ENCODE measurements at regions of chr2 and their contacts with region 1.

Region 1: GRCh38 chr2:636641-637405 is 40.4 kb downstream of the TMEM18 start:
- DNase-seq: peak in 9 of 10 donors; percentile 54 to 83 (median 72)
- H3K4me3 ChIP-seq: peak overlapping the region in 58 of 59 donors; percentile 12 to 64 (median 48)
- H3K27ac ChIP-seq: peak overlapping the region in 4 of 59 donors; percentile 30 to 67 (median 48)
- H3K27me3 ChIP-seq: peaks cover 0 to 3% (median 0%) of the 10 kb centered on the region in 45 donors
- CTCF ChIP-seq: peak; percentile 79 to 97 (median 90)

Region 2: DNA sequence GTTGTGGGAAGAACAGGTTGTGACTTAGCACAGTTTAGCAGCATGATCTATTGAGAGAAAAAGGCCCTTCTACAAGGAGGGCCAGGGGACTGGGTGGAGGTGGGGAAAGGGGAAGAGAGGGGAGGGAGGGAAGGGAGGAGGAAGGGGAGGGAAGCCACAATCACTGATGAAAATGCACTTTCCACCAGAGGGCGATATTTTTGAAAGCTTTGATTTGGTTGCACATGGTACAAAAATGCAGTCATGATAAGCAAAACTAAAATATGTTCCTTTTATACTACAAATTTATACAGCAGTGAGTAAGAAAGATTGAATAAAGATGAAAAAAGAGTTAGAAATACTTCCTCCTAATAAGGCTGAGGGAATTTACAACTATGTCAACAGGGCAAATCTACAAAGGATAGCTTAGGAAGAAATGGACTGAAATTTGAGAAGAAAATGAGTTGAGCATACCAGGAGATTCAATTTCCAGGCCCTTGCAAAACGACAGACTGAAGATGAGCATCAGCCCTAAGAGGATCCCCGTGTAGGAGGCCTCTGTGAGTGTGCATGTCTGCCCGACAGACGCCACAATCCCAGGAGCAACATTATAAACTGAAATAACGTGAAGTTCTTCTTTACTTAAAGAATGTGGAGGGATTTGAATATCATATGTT is 390.2 kb before region 1 on chr2:
- intact Hi-C with region 1: loop called in 1 of 2 experiments (anchors 10 kb)
- DNase-seq: no peak
- H3K4me3 ChIP-seq: no peak overlapping the region
- H3K27ac ChIP-seq: peak overlapping the region in 8 of 59 donors; percentile 2 to 45 (median 14)
- H3K27me3 ChIP-seq: no peaks in the 10 kb centered on the region
- CTCF ChIP-seq: peak; percentile 42 to 77 (median 67)

Region 3: DNA sequence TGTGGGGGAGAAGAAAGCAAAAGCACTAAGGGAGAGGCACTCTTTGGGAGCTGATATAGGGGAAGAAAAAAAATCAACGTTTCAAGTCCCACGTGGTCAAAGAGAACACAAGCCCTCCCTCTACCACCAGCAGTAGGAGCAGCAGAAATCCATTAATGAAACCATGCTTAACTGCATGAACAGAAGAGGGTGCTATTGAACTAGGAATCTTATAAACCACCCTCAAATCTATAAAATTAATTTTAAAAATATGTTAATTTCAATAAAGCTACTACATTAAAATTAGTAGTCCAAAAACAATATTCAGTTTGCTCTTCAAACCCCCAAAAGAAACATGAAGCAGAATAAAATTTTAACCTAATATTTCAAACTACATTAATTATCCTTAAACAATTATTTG is 107.4 kb before region 1 on chr2:
- intact Hi-C with region 1: loop called (anchors 2 to 10 kb)
- DNase-seq: no peak
- H3K4me3 ChIP-seq: no peak overlapping the region
- H3K27ac ChIP-seq: no peak overlapping the region
- H3K27me3 ChIP-seq: peaks cover 0 to 13% (median 0%) of the 10 kb centered on the region in 45 donors
- CTCF ChIP-seq: peak in 50 of 56 donors; percentile 12 to 77 (median 44)

Region 4: GRCh38 chr2:677056-677965 is 40.5 kb after region 1 on chr2 and contains the start of gene TMEM18:
- intact Hi-C with region 1: loop called in 1 of 2 experiments (anchors 5 kb)
- DNase-seq: peak; percentile 73 to 96 (median 90)
- H3K4me3 ChIP-seq: peak within 1 kb of the TSS; percentile 69 to 99 (median 91)
- H3K27ac ChIP-seq: peak within 1 kb of the TSS; percentile 87 to 100 (median 98)
- H3K27me3 ChIP-seq: no peaks in the 10 kb centered on the region
- CTCF ChIP-seq: peak in 54 of 56 donors; percentile 13 to 69 (median 53)
- total RNA-seq, gene TMEM18: 7.8 to 32.4 (median 21.4) TPM